Natural killer cell (primary cell): ENCODE measurements at regions of chr20 and their contacts with region 1.

Region 1: GRCh38 chr20:2663887-2664719 is at the start of gene IDH3B:
- DNase-seq: peak; percentile 90 to 95
- ATAC-seq: peak; percentile 96 to 97 (median 97)
- H3K4me3 ChIP-seq: peak within 1 kb of the TSS; percentile 55
- H3K4me3 Mint-ChIP-seq: peak within 1 kb of the TSS; percentile 99
- H3K27ac ChIP-seq: peak within 1 kb of the TSS; percentile 96
- H3K27ac Mint-ChIP-seq: peak within 1 kb of the TSS; percentile 91 to 98
- H3K4me1 ChIP-seq: peaks cover 12% of the 10 kb centered on the region
- H3K4me1 Mint-ChIP-seq: peaks cover 16 to 24% of the 10 kb centered on the region in 2 donors
- H3K27me3 ChIP-seq: no peaks in the 10 kb centered on the region
- H3K27me3 Mint-ChIP-seq: peaks cover 0 to 6% of the 10 kb centered on the region in 2 donors
- CTCF ChIP-seq: no peak
- total RNA-seq, gene IDH3B: 149 to 161 (median 153) TPM

Region 2: GRCh38 chr20:2508631-2509467 is 155.3 kb before region 1 on chr20 and contains the start of gene ZNF343:
- intact Hi-C with region 1: loop called (anchors 5 kb)
- DNase-seq: peak; percentile 74 to 89
- ATAC-seq: peak; percentile 94 to 96 (median 95)
- H3K4me3 ChIP-seq: peak within 1 kb of the TSS; percentile 66
- H3K4me3 Mint-ChIP-seq: peak within 1 kb of the TSS; percentile 100
- H3K27ac ChIP-seq: peak within 1 kb of the TSS; percentile 70
- H3K27ac Mint-ChIP-seq: peak within 1 kb of the TSS; percentile 88 to 89
- H3K4me1 ChIP-seq: peaks cover 14% of the 10 kb centered on the region
- H3K4me1 Mint-ChIP-seq: peaks cover 18 to 20% of the 10 kb centered on the region in 2 donors
- H3K27me3 ChIP-seq: no peaks in the 10 kb centered on the region
- H3K27me3 Mint-ChIP-seq: peaks cover 7 to 28% of the 10 kb centered on the region in 2 donors
- CTCF ChIP-seq: no peak
- total RNA-seq, gene ZNF343: 8.1 to 12.3 (median 8.6) TPM

Region 3: GRCh38 chr20:2651772-2652723 is 12.1 kb before region 1 on chr20 and contains the start of gene NOP56:
- intact Hi-C with region 1: loop called (anchors 1 kb)
- DNase-seq: peak; percentile 96 to 98
- ATAC-seq: peak; percentile 94 to 99 (median 96)
- H3K4me3 ChIP-seq: peak within 1 kb of the TSS; percentile 77
- H3K4me3 Mint-ChIP-seq: peak within 1 kb of the TSS; percentile 95
- H3K27ac ChIP-seq: peak within 1 kb of the TSS; percentile 65
- H3K27ac Mint-ChIP-seq: peak within 1 kb of the TSS; percentile 79 to 87
- H3K4me1 ChIP-seq: peaks cover 24% of the 10 kb centered on the region
- H3K4me1 Mint-ChIP-seq: peaks cover 16 to 33% of the 10 kb centered on the region in 2 donors
- H3K27me3 ChIP-seq: no peaks in the 10 kb centered on the region
- H3K27me3 Mint-ChIP-seq: no peaks in the 10 kb centered on the region
- CTCF ChIP-seq: no peak
- total RNA-seq, gene NOP56: 169 to 216 (median 214) TPM

Region 4: DNA sequence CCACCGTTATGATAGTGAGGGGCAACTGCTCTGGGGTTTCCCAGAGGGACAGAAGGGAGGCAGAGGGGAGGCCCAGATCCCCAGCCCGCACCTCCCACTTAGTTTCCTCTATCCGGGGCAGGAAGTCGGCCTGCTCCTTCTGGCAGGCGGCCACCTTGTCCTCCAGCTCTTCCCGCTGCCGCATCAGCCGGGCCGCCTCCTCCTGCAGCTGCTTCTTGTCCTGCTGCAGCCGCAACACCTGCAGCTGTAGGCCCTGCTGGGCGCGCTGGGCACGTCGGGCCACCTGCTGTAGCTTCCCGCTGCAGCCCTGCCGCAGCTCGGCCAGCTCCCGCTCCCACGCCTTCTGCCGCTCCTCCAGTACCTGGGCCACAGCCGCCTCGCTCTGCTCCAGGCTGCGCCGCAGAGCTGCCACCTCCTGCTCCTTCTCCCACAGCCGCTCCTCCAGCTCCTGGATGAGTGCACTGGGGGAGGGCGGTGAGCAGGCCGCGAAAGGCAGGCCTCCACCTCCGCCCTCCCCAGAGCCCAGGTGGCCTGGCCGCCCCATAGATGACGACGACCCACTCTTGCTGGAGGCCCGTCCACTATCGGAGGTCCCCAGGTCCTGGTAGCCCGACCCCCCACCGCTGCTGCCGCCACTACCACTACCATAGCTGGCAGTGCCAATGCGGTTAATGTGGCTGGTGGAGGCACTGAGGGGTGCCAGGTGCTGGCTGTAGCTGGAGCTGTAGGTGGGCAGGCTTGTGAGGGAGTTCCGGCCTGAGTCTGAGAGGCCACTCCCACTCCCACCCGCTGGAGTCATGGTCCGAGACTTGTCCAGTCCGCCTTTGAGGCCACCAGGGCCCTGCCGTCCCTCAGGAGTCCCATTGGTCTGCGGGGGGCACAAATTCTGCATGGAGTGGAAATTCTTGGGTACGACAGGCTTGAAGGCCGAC is 501.6 kb after region 1 on chr20:
- intact Hi-C with region 1: no loop called
- DNase-seq: no peak
- ATAC-seq: no peak
- H3K4me3 ChIP-seq: no peak overlapping the region
- H3K4me3 Mint-ChIP-seq: peak overlapping the region; percentile 45
- H3K27ac ChIP-seq: no peak overlapping the region
- H3K27ac Mint-ChIP-seq: no peak overlapping the region
- H3K4me1 ChIP-seq: no peaks in the 10 kb centered on the region
- H3K4me1 Mint-ChIP-seq: no peaks in the 10 kb centered on the region
- H3K27me3 ChIP-seq: peaks cover 8% of the 10 kb centered on the region
- H3K27me3 Mint-ChIP-seq: peaks cover 19 to 34% of the 10 kb centered on the region in 2 donors
- CTCF ChIP-seq: no peak